ENCODE measurements at regions of chr1 and their contacts with region 1.

Region 1: GRCh38 chr1:84090447-84091245 is 53.4 kb upstream of the PRKACB start:
- DNase-seq: no peak
- H3K4me3 Mint-ChIP-seq: peak overlapping the region; percentile 23
- H3K27ac Mint-ChIP-seq: peak overlapping the region; percentile 43
- H3K4me1 Mint-ChIP-seq: peaks cover 28% of the 10 kb centered on the region
- H3K27me3 Mint-ChIP-seq: no peaks in the 10 kb centered on the region

Region 2: GRCh38 chr1:83799594-83799993 is 291.1 kb before region 1 on chr1:
- intact Hi-C with region 1: no loop called
- DNase-seq: no peak
- H3K4me3 Mint-ChIP-seq: no peak overlapping the region
- H3K27ac Mint-ChIP-seq: no peak overlapping the region
- H3K4me1 Mint-ChIP-seq: no peaks in the 10 kb centered on the region
- H3K27me3 Mint-ChIP-seq: no peaks in the 10 kb centered on the region

Region 3: GRCh38 chr1:84037758-84038611 is 52.7 kb before region 1 on chr1:
- intact Hi-C with region 1: no loop called
- DNase-seq: no peak
- H3K4me3 Mint-ChIP-seq: no peak overlapping the region
- H3K27ac Mint-ChIP-seq: no peak overlapping the region
- H3K4me1 Mint-ChIP-seq: no peaks in the 10 kb centered on the region
- H3K27me3 Mint-ChIP-seq: peaks cover 19% of the 10 kb centered on the region

Region 4: GRCh38 chr1:84077476-84078107 is 13.1 kb before region 1 on chr1:
- intact Hi-C with region 1: loop called (anchors 1 kb)
- DNase-seq: peak; percentile 70
- H3K4me3 Mint-ChIP-seq: peak overlapping the region; percentile 84
- H3K27ac Mint-ChIP-seq: peak overlapping the region; percentile 59
- H3K4me1 Mint-ChIP-seq: peaks cover 13% of the 10 kb centered on the region
- H3K27me3 Mint-ChIP-seq: peaks cover 6% of the 10 kb centered on the region

Region 5: GRCh38 chr1:84143796-84144565 is 53.3 kb after region 1 on chr1 and contains the start of gene PRKACB:
- intact Hi-C with region 1: no loop called
- DNase-seq: no peak
- H3K4me3 Mint-ChIP-seq: peak within 1 kb of the TSS; percentile 95
- H3K27ac Mint-ChIP-seq: peak within 1 kb of the TSS; percentile 98
- H3K4me1 Mint-ChIP-seq: peaks cover 36% of the 10 kb centered on the region
- H3K27me3 Mint-ChIP-seq: no peaks in the 10 kb centered on the region
- total RNA-seq, gene PRKACB: 16.4 and 20.9 TPM in 2 replicates

Region 6: DNA sequence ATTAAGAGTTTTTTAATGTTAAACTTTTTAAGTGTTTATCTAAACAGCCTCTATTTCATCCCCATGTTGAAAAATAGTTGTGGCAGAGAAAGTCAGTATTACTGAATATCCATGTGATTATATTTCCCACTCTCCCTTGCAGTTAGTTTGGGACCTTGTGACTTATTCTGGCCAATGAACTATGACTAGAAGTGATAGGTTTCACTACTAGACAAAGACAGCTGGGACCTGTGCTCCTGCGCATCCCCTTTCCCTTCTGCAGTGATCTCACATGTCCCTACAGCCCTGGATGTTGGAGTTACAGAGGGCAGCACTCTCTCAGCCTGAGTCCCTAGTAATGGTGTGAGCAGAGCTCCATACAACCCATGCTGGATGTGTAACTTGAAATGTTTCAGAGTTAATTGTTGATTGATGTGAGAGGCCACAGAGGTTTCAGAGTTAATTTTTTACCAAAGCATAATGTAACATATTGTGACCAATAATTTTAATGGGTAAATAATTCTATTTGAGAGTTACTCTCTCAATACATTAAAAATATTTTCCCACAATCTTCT is 192.2 kb after region 1 on chr1:
- intact Hi-C with region 1: no loop called
- DNase-seq: no peak
- H3K4me3 Mint-ChIP-seq: no peak overlapping the region
- H3K27ac Mint-ChIP-seq: no peak overlapping the region
- H3K4me1 Mint-ChIP-seq: no peaks in the 10 kb centered on the region
- H3K27me3 Mint-ChIP-seq: peaks cover 10% of the 10 kb centered on the region